ENCODE measurements at regions of chr21 and their contacts with region 1.

Region 1: GRCh38 chr21:15592271-15592860 is 137.4 kb upstream of the USP25 start:
- DNase-seq: no peak
- ATAC-seq: no peak
- H3K4me3 Mint-ChIP-seq: no peak overlapping the region
- H3K27ac Mint-ChIP-seq: no peak overlapping the region
- H3K4me1 Mint-ChIP-seq: no peaks in the 10 kb centered on the region
- H3K27me3 Mint-ChIP-seq: no peaks in the 10 kb centered on the region
- CTCF ChIP-seq: no peak

Region 2: GRCh38 chr21:14306151-14306907 is 1286.0 kb before region 1 on chr21:
- CTCF ChIA-PET with region 1: interaction called, 3 read pairs
- POLR2A ChIA-PET with region 1: no interaction called
- intact Hi-C with region 1: loop called (anchors 1 kb)
- DNase-seq: no peak
- ATAC-seq: no peak
- H3K4me3 Mint-ChIP-seq: no peak overlapping the region
- H3K27ac Mint-ChIP-seq: no peak overlapping the region
- H3K4me1 Mint-ChIP-seq: peaks cover 4% of the 10 kb centered on the region
- H3K27me3 Mint-ChIP-seq: peaks cover 2% of the 10 kb centered on the region
- CTCF ChIP-seq: no peak

Region 3: DNA sequence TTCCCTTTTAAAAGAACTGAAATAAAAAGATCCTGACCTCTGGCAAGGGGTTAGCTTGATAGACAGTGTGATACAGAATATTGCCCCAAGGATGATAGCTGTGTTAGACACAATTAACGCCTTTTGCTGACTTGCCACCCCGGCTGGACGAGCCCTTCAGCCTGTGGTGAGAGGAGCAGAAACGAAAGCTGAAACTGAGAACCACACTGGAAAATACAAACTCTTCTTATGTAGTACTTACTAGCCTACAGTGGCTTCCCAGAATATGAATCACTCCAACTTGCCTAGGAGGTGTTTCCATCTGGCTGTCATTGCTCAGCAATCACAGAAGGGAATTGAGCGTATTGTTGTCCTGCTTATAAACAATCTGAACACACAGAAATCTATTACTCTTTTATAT is 1069.1 kb before region 1 on chr21:
- CTCF ChIA-PET with region 1: no interaction called
- POLR2A ChIA-PET with region 1: no interaction called
- intact Hi-C with region 1: loop called (anchors 1 kb)
- DNase-seq: no peak
- ATAC-seq: peak; percentile 60
- H3K4me3 Mint-ChIP-seq: peak overlapping the region; percentile 78
- H3K27ac Mint-ChIP-seq: peak overlapping the region; percentile 82
- H3K4me1 Mint-ChIP-seq: peaks cover 63% of the 10 kb centered on the region
- H3K27me3 Mint-ChIP-seq: no peaks in the 10 kb centered on the region
- CTCF ChIP-seq: no peak

Region 4: GRCh38 chr21:14864211-14865021 is 728.0 kb before region 1 on chr21:
- CTCF ChIA-PET with region 1: no interaction called
- POLR2A ChIA-PET with region 1: no interaction called
- intact Hi-C with region 1: loop called (anchors 1 kb)
- DNase-seq: no peak
- ATAC-seq: peak; percentile 64
- H3K4me3 Mint-ChIP-seq: no peak overlapping the region
- H3K27ac Mint-ChIP-seq: no peak overlapping the region
- H3K4me1 Mint-ChIP-seq: peaks cover 49% of the 10 kb centered on the region
- H3K27me3 Mint-ChIP-seq: no peaks in the 10 kb centered on the region
- CTCF ChIP-seq: no peak

Region 5: GRCh38 chr21:15729674-15730483 is 137.5 kb after region 1 on chr21 and contains the start of gene USP25:
- CTCF ChIA-PET with region 1: no interaction called
- POLR2A ChIA-PET with region 1: no interaction called
- intact Hi-C with region 1: no loop called
- DNase-seq: peak; percentile 80
- ATAC-seq: peak; percentile 89
- H3K4me3 Mint-ChIP-seq: peak within 1 kb of the TSS; percentile 88
- H3K27ac Mint-ChIP-seq: peak within 1 kb of the TSS; percentile 88
- H3K4me1 Mint-ChIP-seq: peaks cover 39% of the 10 kb centered on the region
- H3K27me3 Mint-ChIP-seq: no peaks in the 10 kb centered on the region
- CTCF ChIP-seq: no peak
- total RNA-seq, gene USP25: 37.2 and 38.3 TPM in 2 replicates

Region 6: DNA sequence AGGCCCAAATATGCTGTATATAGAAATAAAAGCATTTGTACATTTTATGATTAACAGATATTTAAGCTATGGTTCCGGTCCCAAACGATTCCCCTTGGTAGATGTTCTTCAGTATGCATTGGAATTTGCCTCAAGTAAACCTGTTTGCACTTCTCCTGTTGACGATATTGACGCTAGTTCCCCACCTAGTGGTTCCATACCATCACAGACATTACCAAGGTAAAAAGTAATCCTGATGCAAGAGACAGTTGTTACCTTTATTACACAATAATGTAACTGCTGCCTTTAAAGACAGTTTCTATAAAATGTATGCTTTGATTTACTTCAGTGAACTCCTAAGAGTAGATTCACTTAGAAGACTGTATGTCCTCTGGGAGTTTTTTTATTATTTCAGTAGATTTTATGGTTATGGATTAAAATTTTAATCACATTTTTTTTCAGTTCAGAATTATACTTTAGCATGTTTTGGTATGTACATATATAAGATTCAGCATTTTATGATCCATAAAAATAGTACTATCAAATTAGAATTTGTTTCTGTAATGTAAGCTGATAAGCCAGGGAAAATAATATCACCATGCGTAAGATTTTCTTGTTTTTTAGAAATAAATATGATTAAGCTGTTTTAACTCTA is 233.9 kb after region 1 on chr21:
- CTCF ChIA-PET with region 1: no interaction called
- POLR2A ChIA-PET with region 1: no interaction called
- intact Hi-C with region 1: loop called (anchors 10 kb)
- DNase-seq: no peak
- ATAC-seq: peak; percentile 45
- H3K4me3 Mint-ChIP-seq: no peak overlapping the region
- H3K27ac Mint-ChIP-seq: no peak overlapping the region
- H3K4me1 Mint-ChIP-seq: no peaks in the 10 kb centered on the region
- H3K27me3 Mint-ChIP-seq: no peaks in the 10 kb centered on the region
- CTCF ChIP-seq: no peak

Measured in activated B cell treated with CpG ODN at 0.5 μM for 24 hours (primary cell).